B cell (primary cell): ENCODE measurements at regions of chr1 and their contacts with region 1.

Region 1: GRCh38 chr1:222713091-222713961 is 962 bp downstream of the BROX start:
- DNase-seq: peak; percentile 97
- ATAC-seq: peak; percentile 73
- H3K4me3 ChIP-seq: peak overlapping the region; percentile 70 to 98 (median 81)
- H3K4me3 Mint-ChIP-seq: peak overlapping the region; percentile 97
- H3K27ac ChIP-seq: peak overlapping the region; percentile 97 to 99
- H3K27ac Mint-ChIP-seq: peak overlapping the region; percentile 100
- H3K4me1 ChIP-seq: peaks cover 26 to 35% of the 10 kb centered on the region in 2 donors
- H3K4me1 Mint-ChIP-seq: peaks cover 48% of the 10 kb centered on the region
- H3K27me3 ChIP-seq: no peaks in the 10 kb centered on the region
- H3K27me3 Mint-ChIP-seq: no peaks in the 10 kb centered on the region
- CTCF ChIP-seq: peak; percentile 13

Region 2: DNA sequence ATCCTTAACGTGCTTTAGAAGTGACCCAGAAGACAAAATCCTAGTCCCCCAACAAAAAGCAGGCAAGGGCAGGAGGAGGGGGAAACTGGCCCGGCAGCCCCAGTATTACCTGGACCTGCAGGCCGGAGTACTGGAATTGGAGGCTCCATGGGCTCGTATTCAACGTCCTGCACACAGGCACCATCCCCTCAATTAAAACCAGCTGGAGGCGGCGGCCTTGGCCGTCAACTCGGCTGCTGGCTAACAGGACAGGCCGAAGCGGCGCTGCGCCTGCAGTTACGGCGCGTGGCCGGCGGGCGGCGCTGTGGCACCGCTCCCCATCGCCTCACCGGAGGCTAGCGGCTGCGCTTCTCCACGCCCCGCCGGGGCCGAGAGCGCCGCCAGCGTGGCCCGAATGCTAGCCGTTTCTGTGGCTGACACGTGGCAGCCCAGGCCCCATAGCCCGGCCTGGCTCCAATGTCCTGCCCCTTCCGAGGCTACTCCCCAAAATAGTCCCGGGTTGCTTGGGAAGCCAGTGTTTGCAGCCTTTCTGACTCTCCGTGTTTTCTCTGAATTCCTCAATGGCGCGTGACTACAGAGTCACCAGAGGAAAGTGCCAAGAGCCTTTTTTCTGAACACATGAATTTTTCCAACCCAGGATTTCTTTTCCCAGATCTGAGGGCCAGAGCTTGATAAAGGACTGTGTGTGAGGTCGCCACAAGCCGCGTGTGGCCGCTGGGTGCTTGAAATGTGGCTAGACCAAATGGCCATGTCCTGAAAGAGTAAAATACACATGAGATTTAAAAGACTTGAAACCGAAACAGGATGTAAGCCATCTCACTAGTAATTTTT is 247.9 kb before region 1 on chr1:
- CTCF ChIA-PET with region 1: interaction called, 5 read pairs
- POLR2A ChIA-PET with region 1: interaction called, 5 read pairs
- intact Hi-C with region 1: loop called (anchors 1 kb)
- DNase-seq: peak; percentile 92
- ATAC-seq: peak; percentile 95
- H3K4me3 ChIP-seq: peak overlapping the region; percentile 36 to 82 (median 72)
- H3K4me3 Mint-ChIP-seq: peak overlapping the region; percentile 92
- H3K27ac ChIP-seq: peak overlapping the region; percentile 77 to 84
- H3K27ac Mint-ChIP-seq: peak overlapping the region; percentile 96
- H3K4me1 ChIP-seq: peaks cover 3 to 15% of the 10 kb centered on the region in 2 donors
- H3K4me1 Mint-ChIP-seq: peaks cover 13% of the 10 kb centered on the region
- H3K27me3 ChIP-seq: peaks cover 0 to under 1% (median 0%) of the 10 kb centered on the region in 4 experiments
- H3K27me3 Mint-ChIP-seq: peaks cover 13% of the 10 kb centered on the region
- CTCF ChIP-seq: peak; percentile 100

Region 3: GRCh38 chr1:222617367-222617951 is 95.9 kb before region 1 on chr1:
- CTCF ChIA-PET with region 1: no interaction called
- POLR2A ChIA-PET with region 1: interaction called, 6 read pairs
- intact Hi-C with region 1: loop called (anchors 1 kb)
- DNase-seq: peak; percentile 95
- ATAC-seq: peak; percentile 90
- H3K4me3 ChIP-seq: peak overlapping the region; percentile 6 to 91 (median 67)
- H3K4me3 Mint-ChIP-seq: peak overlapping the region; percentile 96
- H3K27ac ChIP-seq: peak overlapping the region; percentile 71 to 82
- H3K27ac Mint-ChIP-seq: peak overlapping the region; percentile 95
- H3K4me1 ChIP-seq: peaks cover 17 to 18% of the 10 kb centered on the region in 2 donors
- H3K4me1 Mint-ChIP-seq: peaks cover 29% of the 10 kb centered on the region
- H3K27me3 ChIP-seq: peaks cover 0 to 15% (median 6%) of the 10 kb centered on the region in 4 experiments
- H3K27me3 Mint-ChIP-seq: peaks cover 19% of the 10 kb centered on the region
- CTCF ChIP-seq: no peak

Region 4: GRCh38 chr1:222654849-222655248 is 58.5 kb before region 1 on chr1:
- CTCF ChIA-PET with region 1: interaction called, 6 read pairs
- POLR2A ChIA-PET with region 1: no interaction called
- intact Hi-C with region 1: loop called (anchors 1 kb)
- DNase-seq: peak; percentile 88
- ATAC-seq: peak; percentile 99
- H3K4me3 ChIP-seq: no peak overlapping the region
- H3K4me3 Mint-ChIP-seq: peak overlapping the region; percentile 40
- H3K27ac ChIP-seq: peak overlapping the region; percentile 81 to 95
- H3K27ac Mint-ChIP-seq: peak overlapping the region; percentile 59
- H3K4me1 ChIP-seq: peaks cover 16 to 20% of the 10 kb centered on the region in 2 donors
- H3K4me1 Mint-ChIP-seq: peaks cover 35% of the 10 kb centered on the region
- H3K27me3 ChIP-seq: no peaks in the 10 kb centered on the region
- H3K27me3 Mint-ChIP-seq: no peaks in the 10 kb centered on the region
- CTCF ChIP-seq: peak; percentile 51

Region 5: DNA sequence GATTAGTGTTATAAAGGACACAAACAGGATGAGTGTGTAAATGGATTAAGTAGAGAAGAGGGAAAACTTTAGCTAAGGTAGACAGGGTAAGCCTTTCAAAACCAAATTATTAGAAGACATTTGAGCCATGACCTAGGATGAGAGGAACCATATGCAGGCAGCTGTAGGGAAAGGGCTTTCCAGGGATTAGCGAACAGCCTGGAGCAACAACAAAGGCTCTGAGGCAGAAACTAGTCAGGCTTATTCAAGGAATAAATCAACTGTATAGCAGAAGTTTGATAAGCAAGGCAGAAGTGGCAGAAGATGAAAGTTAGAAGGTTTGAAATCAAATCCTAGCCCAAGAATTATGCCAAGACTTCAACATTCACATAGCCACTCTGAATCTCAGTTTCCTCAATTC is 22.3 kb before region 1 on chr1:
- CTCF ChIA-PET with region 1: no interaction called
- POLR2A ChIA-PET with region 1: no interaction called
- intact Hi-C with region 1: no loop called
- DNase-seq: no peak
- ATAC-seq: no peak
- H3K4me3 ChIP-seq: no peak overlapping the region
- H3K4me3 Mint-ChIP-seq: no peak overlapping the region
- H3K27ac ChIP-seq: peak overlapping the region in 1 of 2 donors; percentile 42
- H3K27ac Mint-ChIP-seq: peak overlapping the region; percentile 4
- H3K4me1 ChIP-seq: peaks cover 4 to 6% of the 10 kb centered on the region in 2 donors
- H3K4me1 Mint-ChIP-seq: peaks cover 19% of the 10 kb centered on the region
- H3K27me3 ChIP-seq: no peaks in the 10 kb centered on the region
- H3K27me3 Mint-ChIP-seq: no peaks in the 10 kb centered on the region
- CTCF ChIP-seq: no peak

Region 6: DNA sequence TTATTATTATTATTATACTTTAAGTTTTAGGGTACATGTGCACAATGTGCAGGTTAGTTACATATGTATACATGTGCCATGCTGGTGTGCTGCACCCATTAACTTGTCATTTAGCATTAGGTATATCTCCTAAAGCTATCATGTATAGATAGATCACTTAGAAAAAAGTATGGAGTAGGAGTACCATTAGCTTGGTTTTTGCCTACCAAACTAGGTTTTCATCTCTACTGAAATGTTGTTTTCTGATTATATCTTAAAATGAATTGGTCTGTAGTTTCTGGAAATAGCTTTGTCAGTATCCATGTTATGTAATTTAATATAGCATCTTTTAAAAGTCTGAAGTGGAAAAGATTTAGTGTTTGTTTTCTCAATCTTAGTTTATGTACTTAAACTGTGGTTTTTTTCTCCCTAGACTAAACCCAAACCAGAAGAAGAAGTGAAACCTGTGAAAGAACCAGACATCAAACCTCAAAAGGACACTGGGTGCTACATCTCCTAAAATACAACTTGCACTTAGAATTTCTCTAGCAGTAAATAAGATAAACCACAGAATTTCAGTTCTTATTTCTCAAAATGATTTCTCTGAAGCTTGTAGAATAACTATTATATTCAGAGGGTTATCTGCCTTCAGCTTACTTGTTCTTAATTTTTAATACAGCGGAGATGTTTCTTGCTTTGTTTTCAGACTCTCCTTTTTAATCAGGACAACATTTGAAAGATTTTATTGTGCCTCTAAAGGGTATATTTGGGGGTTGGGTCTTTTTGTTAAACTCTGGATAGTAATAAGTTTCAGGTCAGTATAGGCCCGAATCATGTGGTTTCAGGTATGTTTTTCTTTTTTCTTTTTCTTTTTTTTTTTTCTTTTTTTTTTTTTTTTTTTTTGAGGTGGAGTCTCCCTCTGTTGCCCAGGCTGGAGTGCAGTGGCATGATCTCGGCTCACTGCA is 19.2 kb after region 1 on chr1:
- CTCF ChIA-PET with region 1: interaction called, 25 read pairs
- POLR2A ChIA-PET with region 1: interaction called, 50 read pairs
- intact Hi-C with region 1: loop called (anchors 1 kb)
- DNase-seq: peak; percentile 84
- ATAC-seq: peak; percentile 82
- H3K4me3 ChIP-seq: peak overlapping the region in 3 of 5 experiments; percentile 13 to 45 (median 27)
- H3K4me3 Mint-ChIP-seq: peak overlapping the region; percentile 78
- H3K27ac ChIP-seq: peak overlapping the region; percentile 62 to 84
- H3K27ac Mint-ChIP-seq: peak overlapping the region; percentile 93
- H3K4me1 ChIP-seq: peaks cover 56 to 68% of the 10 kb centered on the region in 2 donors
- H3K4me1 Mint-ChIP-seq: peaks cover 56% of the 10 kb centered on the region
- H3K27me3 ChIP-seq: no peaks in the 10 kb centered on the region
- H3K27me3 Mint-ChIP-seq: no peaks in the 10 kb centered on the region
- CTCF ChIP-seq: no peak

Region 7: DNA sequence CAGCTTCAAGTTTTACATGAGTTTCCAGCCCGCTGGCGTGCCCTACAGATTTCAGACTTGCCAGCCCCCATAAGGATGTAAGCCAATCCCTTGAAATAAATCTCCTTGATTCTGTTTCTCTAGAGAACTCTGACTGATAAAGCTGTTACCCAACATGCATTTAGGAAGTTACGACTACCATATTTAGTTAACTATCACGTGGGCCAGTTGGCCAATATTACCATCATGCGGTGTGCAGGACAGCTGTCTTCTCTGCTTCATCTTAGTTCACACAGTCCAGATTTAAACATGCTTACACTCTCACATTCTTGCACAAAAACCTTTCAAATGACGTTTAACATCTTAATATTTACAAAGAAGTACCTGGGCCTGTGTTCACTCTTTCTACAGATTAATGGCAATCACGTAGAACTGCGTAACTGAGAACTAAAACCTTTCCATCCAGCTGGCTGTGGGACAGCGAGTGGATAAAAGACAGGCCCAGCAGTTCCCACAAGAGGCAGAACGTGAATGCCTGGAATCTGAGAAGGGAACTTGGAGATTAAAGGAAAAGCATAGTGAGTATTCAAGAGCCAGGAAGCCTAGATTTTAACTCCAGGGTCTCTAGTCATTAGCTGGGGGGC is 44.4 kb after region 1 on chr1:
- CTCF ChIA-PET with region 1: no interaction called
- POLR2A ChIA-PET with region 1: no interaction called
- intact Hi-C with region 1: no loop called
- DNase-seq: no peak
- ATAC-seq: no peak
- H3K4me3 ChIP-seq: no peak overlapping the region
- H3K4me3 Mint-ChIP-seq: no peak overlapping the region
- H3K27ac ChIP-seq: no peak overlapping the region
- H3K27ac Mint-ChIP-seq: no peak overlapping the region
- H3K4me1 ChIP-seq: peaks cover 24 to 26% of the 10 kb centered on the region in 2 donors
- H3K4me1 Mint-ChIP-seq: peaks cover 28% of the 10 kb centered on the region
- H3K27me3 ChIP-seq: no peaks in the 10 kb centered on the region
- H3K27me3 Mint-ChIP-seq: no peaks in the 10 kb centered on the region
- CTCF ChIP-seq: no peak

Region 8: GRCh38 chr1:222772996-222773379 is 59.7 kb after region 1 on chr1:
- CTCF ChIA-PET with region 1: interaction called, 6 read pairs
- POLR2A ChIA-PET with region 1: interaction called, 14 read pairs
- intact Hi-C with region 1: loop called (anchors 1 kb)
- DNase-seq: peak; percentile 82
- ATAC-seq: peak; percentile 78
- H3K4me3 ChIP-seq: peak overlapping the region in 1 of 5 experiments; percentile 17
- H3K4me3 Mint-ChIP-seq: peak overlapping the region; percentile 61
- H3K27ac ChIP-seq: peak overlapping the region; percentile 84 to 85
- H3K27ac Mint-ChIP-seq: peak overlapping the region; percentile 91
- H3K4me1 ChIP-seq: peaks cover 36 to 39% of the 10 kb centered on the region in 2 donors
- H3K4me1 Mint-ChIP-seq: peaks cover 44% of the 10 kb centered on the region
- H3K27me3 ChIP-seq: no peaks in the 10 kb centered on the region
- H3K27me3 Mint-ChIP-seq: no peaks in the 10 kb centered on the region
- CTCF ChIP-seq: no peak

Region 9: DNA sequence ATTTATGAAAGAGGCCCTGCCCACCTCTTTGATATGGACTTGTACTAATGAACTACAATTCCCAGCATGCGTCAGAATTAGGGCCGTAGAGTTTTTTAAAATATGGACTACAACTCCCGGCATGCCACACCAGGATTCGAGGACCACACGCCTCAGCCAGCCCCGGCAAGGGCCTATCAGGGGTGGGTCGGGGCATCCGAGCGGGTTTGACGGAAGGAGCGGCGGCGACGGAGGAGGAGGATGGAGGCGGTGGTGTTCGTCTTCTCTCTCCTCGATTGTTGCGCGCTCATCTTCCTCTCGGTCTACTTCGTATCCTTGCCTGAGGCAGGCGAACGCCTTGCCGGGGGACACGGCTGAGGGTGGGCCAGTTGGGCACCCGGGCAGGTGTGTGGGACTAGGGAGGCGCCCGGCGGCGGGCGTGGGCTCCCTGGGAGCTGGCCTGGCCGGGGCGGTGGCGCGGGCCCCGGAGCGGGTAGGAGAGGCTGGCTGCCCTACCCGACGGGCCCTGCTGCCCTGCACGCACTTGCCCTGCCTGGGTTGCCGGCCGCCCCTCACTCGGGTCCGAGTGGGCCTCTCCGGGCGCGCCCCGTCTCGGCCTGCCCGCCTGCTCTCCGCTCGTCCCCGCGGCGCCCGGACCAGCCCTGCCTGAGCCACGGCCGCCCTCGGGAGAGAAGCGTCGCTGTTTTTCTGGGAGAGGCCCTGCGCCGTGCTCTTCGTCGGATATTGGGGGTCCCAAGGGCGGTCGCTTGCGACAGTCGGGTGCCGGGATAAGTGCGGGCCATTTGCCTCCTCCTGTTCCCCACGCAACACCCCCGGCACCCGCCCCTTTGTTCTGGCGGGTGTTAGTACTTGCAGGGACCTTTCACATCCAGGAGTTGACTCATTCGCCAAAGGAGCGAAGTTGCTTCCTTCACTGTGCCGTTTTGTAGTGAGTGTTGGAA is 1643.6 kb after region 1 on chr1 and contains the start of gene CNIH4:
- CTCF ChIA-PET with region 1: no interaction called
- POLR2A ChIA-PET with region 1: no interaction called
- intact Hi-C with region 1: loop called (anchors 2 kb)
- DNase-seq: peak; percentile 94
- ATAC-seq: peak; percentile 98
- H3K4me3 ChIP-seq: peak within 1 kb of the TSS; percentile 69 to 88 (median 82)
- H3K4me3 Mint-ChIP-seq: peak within 1 kb of the TSS; percentile 86
- H3K27ac ChIP-seq: peak within 1 kb of the TSS; percentile 34 to 61
- H3K27ac Mint-ChIP-seq: peak within 1 kb of the TSS; percentile 92
- H3K4me1 ChIP-seq: peaks cover 9 to 14% of the 10 kb centered on the region in 2 donors
- H3K4me1 Mint-ChIP-seq: peaks cover 22% of the 10 kb centered on the region
- H3K27me3 ChIP-seq: no peaks in the 10 kb centered on the region
- H3K27me3 Mint-ChIP-seq: no peaks in the 10 kb centered on the region
- CTCF ChIP-seq: no peak
- total RNA-seq, gene CNIH4: 27.2 and 31.5 TPM in 2 replicates